Activated naive CD4-positive, alpha-beta T cell treated with anti-CD3 and anti-CD28 coated beads, Interleukin-2, amount 10 ng/mL, durations not matched to agents 7 days and 5 days (primary cell): ENCODE measurements at regions of chr11 and their contacts with region 1.

Region 1: DNA sequence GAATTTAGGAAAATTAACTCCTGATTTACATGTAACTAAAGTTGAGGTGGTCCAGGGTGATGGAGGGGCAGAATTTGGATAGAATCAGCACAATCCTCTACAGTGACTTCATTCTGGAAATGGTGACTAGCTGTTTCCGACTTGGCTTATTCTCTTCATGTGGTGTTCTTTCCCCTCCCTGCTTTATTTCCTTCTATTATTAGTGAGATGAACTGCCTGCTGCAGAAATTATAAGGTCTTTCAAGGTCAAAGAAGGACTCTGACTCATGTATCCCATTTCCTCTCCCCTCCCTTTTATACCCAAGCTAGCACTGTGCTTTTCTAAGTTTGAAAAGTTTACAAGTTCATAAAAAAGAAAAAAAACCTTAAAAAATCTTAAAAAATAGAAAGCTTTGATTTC is 12.2 kb upstream of the MRPL17 start:
- DNase-seq: no peak
- H3K4me3 Mint-ChIP-seq: no peak overlapping the region
- H3K27ac Mint-ChIP-seq: no peak overlapping the region
- H3K4me1 Mint-ChIP-seq: peaks cover 30% of the 10 kb centered on the region
- H3K27me3 Mint-ChIP-seq: no peaks in the 10 kb centered on the region

Region 2: GRCh38 chr11:6682936-6683861 is 12.2 kb before region 1 on chr11 and contains the start of gene MRPL17:
- CTCF ChIA-PET with region 1: interaction called, 10 read pairs
- DNase-seq: peak; percentile 100
- H3K4me3 Mint-ChIP-seq: peak within 1 kb of the TSS; percentile 98
- H3K27ac Mint-ChIP-seq: peak within 1 kb of the TSS; percentile 96
- H3K4me1 Mint-ChIP-seq: peaks cover 29% of the 10 kb centered on the region
- H3K27me3 Mint-ChIP-seq: no peaks in the 10 kb centered on the region